ENCODE measurements at regions of chr9 and their contacts with region 1.

Region 1: DNA sequence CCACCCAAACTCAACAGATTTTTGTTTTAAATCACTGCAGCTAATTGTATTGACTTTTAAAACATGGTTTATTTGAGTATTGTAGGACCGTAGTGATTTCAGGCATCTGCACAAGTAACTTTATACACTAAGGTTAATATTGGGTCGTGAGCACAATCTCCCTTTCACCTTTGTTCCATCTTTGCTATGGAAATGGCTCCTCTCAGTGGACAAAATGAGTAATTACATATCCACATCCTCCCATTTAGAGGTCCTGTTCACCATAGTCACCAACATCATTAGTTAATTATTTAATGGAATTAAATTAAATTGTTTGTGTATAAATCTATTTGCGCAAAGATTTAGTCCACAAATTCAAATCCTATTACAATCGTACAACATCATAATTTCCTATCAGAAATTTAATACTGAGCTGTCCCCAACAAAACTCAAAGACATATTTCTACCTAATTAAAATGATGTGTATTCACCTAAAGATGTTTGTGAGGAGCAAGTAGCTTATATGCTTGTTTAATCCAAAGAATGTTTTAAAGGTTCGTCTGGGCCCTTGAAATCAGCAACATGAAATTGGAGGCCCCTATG is 173.0 kb upstream of the DAPK1 start:
- DNase-seq: no peak
- H3K4me3 ChIP-seq: no peak overlapping the region
- H3K27ac ChIP-seq: no peak overlapping the region
- H3K4me1 ChIP-seq: peaks cover 5% of the 10 kb centered on the region
- H3K27me3 ChIP-seq: peaks cover 10% of the 10 kb centered on the region
- CTCF ChIP-seq: peak; percentile 83

Region 2: DNA sequence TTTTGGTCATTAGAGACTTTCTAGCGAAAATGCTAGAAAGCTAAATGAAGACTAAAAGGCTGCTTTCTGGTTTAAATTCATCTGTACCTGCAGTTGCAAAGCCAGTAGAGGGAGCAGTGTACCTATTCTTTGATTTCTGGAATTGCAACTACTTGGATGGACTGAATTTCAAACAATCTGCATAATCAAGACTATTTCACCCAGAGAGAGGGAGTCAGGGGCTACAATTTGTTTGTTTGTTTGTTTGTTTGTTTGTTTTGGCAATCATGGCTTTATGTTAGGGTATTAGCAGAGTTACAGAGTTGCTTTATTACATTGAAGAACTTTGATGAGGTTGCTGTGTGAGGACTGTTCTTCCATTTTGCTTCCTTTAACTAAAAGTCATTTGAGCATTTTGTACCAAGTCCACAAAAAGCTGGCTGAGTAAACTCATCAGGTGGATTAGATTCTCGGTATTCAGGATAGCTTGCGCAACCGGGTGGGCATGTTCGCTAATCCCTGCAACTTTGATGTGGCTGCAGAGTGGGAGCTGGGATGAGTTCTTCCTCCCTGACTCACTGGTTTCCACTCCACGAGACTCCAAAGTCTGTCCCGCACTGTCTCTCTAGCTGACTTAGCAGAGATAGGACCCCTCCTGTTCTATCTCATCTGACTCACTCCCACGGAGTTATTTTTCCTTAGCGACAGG is 890.5 kb before region 1 on chr9:
- intact Hi-C with region 1: loop called (anchors 5 kb)
- DNase-seq: no peak
- H3K4me3 ChIP-seq: no peak overlapping the region
- H3K27ac ChIP-seq: no peak overlapping the region
- H3K4me1 ChIP-seq: no peaks in the 10 kb centered on the region
- H3K27me3 ChIP-seq: peaks cover 12% of the 10 kb centered on the region
- CTCF ChIP-seq: peak; percentile 79

Region 3: DNA sequence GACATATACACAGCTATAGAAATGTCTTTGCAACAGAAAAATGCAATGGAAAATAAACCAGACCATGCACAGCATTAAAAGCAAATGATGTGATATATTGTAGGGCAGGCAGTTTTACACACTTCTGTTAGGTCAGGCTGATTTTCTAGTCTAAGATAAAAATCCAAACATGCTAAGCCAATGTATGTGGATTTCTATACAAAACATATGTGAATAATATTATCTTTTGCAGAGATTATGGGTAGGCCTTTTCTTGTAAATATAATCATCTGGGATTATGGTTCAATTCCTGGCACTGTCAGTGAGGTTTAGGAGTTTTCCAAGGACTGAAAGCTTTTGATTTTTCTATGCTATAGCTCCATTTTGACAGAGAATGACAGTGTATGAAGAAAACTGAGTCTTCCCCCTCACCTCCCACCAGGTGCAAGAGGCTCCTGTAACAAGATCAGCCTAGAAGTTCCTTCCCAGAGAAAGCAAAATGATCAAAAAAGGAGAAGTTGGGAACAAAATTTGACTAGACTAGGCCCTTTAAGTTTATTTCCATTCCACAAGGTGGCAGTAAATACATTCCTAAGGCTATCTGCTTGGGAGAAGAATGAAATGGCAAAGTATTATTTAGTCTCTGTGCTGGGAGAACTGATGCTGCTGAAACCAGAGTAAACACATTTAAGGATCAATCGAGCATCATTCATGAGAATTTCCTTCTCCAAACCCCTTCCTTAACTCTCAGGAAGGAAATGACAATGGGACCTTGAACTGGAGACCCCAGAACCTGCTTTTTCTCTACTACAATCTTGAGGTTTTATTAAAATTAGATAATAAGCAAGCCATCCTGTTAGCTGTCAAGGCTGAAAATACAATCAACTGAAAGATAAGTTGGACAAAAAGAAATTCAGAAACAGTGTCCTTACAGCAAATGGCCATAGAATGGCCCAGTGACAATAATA is 837.5 kb before region 1 on chr9:
- intact Hi-C with region 1: loop called (anchors 5 kb)
- DNase-seq: no peak
- H3K4me3 ChIP-seq: no peak overlapping the region
- H3K27ac ChIP-seq: no peak overlapping the region
- H3K4me1 ChIP-seq: peaks cover 4% of the 10 kb centered on the region
- H3K27me3 ChIP-seq: no peaks in the 10 kb centered on the region
- CTCF ChIP-seq: peak; percentile 73

Measured in left ventricle myocardium inferior (tissue), 1 donor.